Pancreas (tissue), 10 donors: ENCODE measurements at regions of chr12 and their contacts with region 1.

Region 1: DNA sequence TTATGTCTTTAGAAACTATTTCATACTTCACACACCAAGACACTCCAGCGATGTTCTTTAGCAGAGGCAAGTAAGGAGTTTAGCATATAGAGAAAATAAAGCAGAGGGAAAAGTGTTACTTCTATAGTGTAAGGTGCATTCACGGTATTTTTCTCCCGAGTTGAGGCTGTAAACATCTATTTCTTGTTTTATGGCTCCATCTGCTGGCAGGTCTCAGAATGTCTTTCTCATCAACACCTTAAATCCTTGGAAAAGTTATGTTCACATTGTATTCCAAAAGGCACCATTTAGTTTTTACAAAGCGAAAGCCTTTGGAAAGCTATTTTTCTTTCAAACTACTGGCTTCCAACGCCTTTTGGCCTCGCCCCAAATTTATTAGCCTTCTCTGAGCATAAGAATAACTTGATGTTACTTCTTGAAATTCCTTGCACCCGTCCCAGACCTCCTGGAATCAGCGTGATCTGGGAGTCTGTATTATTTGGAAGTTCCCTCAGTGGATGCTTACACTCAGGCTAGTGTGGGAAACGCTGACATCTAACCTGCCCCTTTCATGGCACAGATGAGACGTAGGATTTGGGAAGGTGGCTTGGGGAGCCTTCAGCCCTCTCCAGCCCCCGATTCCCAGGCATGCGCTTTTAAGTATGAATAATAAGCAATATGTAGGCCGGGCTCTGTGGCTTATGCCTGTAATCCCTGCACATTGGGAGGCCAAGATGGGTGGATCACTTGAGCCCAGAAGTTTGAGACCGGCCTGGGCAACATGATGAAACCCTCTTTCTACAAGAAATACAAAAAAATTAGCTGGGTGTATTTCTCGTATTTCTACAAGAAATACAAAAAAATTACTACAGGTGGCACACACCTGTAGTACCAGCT is 1.9 kb upstream of the PIWIL1 start:
- DNase-seq: peak in 2 of 6 donors; percentile 27 to 48
- ATAC-seq: peak in 3 of 4 donors; percentile 76 to 80 (median 79)
- H3K4me3 ChIP-seq: no peak overlapping the region
- H3K27ac ChIP-seq: no peak overlapping the region
- H3K4me1 ChIP-seq: no peaks in the 10 kb centered on the region
- H3K27me3 ChIP-seq: peaks cover 0 to 11% (median 0%) of the 10 kb centered on the region in 4 donors
- CTCF ChIP-seq: peak; percentile 9 to 59 (median 46)

Region 2: DNA sequence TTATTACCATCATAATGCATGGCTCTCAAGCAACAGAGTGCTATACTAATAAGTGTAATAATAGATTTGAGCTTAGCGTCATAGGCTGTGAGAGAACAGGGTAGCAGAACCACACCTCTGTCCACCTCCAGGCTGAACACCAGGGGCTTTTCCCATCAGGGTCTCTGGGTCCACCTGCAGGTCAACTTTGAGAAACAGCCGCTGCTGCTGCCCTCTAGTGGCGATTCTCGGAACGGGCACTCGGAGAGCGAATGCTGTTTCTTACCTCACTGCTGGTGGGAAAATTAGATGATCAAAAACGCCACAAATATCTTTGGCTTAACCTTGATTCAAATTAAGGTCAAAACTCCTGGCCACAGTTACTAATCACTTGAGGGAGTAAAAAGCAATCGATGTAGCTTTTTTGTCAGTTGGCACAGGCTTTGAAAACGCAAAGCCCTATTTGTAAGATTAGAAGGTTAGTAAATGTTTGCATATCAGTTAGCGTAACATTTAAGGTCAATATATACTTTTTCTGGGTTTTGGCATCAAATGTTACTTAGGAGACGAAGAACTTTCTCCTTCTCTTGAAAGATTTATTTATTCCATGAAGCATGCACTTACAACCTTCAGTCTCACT is 304.1 kb before region 1 on chr12:
- intact Hi-C with region 1: loop called in 1 of 3 experiments (anchors 5 kb)
- DNase-seq: peak in 5 of 6 donors; percentile 25 to 92 (median 68)
- ATAC-seq: peak in 3 of 4 donors; percentile 63 to 72 (median 67)
- H3K4me3 ChIP-seq: no peak overlapping the region
- H3K27ac ChIP-seq: no peak overlapping the region
- H3K4me1 ChIP-seq: no peaks in the 10 kb centered on the region
- H3K27me3 ChIP-seq: peaks cover 0 to 5% (median 0%) of the 10 kb centered on the region in 4 donors
- CTCF ChIP-seq: peak; percentile 80 to 90 (median 89)

Region 3: DNA sequence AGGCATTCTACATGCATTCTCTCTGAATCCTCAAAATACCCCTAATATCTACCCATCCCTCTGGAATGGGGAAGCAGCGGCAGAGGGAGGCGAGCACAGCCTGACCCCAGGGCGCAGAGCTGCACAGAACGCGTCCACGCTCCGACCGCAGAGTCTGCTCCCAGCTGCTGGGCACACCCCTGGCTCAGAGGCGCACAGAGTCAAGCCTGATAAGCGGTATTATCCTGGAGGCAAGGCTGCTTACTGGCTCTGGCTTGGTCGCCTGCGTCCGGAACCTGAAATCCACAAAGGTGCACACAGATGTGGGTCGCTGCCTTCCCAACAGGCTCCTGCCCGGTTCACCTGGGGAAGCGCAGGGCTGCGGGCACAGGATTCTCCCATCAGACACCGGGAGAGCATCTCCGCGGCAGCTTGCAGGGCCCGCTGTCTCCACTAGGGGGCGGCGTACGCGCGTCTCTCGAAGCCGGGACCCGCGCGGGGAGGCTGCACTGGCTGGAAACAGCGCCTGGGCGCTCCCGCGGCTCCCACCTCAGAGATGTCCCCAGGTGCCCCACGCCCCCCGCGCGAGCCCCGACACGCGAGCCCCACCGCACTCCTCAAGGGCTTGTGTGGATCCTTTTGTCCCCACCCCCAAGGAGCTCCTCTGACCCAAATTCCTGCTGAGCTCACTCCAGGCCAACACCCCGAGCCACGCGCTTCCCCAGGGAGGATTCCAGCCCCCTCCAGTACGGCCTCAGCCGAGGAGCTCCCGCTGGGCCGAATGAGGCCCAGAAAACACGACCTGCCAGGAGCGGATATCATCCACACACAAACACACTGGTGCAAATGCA is 293.6 kb before region 1 on chr12:
- intact Hi-C with region 1: loop called (anchors 5 to 10 kb)
- DNase-seq: peak in 5 of 6 donors; percentile 10 to 86 (median 62)
- ATAC-seq: peak in 3 of 4 donors; percentile 59 to 76 (median 69)
- H3K4me3 ChIP-seq: no peak overlapping the region
- H3K27ac ChIP-seq: no peak overlapping the region
- H3K4me1 ChIP-seq: no peaks in the 10 kb centered on the region
- H3K27me3 ChIP-seq: peaks cover 0 to 15% (median 2%) of the 10 kb centered on the region in 4 donors
- CTCF ChIP-seq: peak; percentile 65 to 95 (median 82)

Region 4: DNA sequence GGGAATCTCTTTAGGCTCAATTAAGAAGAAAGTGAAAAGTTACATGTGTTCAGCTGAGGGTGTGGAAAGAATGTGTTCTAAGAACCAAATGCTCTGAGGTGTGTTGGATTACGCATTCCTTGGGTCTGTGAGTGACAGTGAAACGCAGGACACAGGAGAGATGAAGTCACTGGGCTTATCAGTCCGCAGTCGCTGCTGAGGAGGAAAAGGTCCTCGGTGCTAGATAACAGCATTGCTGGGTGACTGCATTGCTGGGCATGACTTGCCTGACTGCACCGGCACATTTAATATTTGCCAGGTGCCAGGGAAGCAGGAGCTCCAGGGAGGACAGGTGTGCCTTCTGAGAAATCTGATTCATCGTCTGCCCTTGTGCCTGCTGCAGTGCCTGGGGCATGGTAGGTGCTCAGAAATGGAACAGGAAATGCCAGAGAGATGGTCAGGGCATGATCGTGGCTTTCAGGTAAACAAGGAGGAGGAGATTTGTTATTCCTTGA is 237.9 kb before region 1 on chr12:
- intact Hi-C with region 1: no loop called
- DNase-seq: no peak
- ATAC-seq: peak in 3 of 4 donors; percentile 36 to 57 (median 52)
- H3K4me3 ChIP-seq: no peak overlapping the region
- H3K27ac ChIP-seq: no peak overlapping the region
- H3K4me1 ChIP-seq: no peaks in the 10 kb centered on the region
- H3K27me3 ChIP-seq: peaks cover 0 to 8% (median 0%) of the 10 kb centered on the region in 4 donors
- CTCF ChIP-seq: no peak

Region 5: DNA sequence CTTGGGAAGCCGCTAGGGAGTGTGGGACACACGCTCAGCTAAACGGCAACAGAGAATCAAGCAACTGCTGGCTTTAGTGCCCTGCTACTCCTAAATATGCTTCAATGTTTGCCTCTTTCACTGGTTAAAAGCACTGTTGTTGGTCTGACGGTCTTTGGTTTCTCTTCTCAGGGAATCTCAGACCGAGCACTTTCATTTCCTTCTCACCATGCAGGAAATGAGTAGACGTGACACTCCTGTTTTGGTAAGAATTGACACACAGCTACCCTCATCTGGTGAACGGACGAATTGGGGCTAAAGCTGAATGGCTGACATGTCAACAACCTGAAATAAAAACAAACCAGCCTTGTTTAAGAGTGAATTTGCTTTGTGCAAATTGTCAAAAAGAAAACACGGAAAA is 55.5 kb before region 1 on chr12:
- intact Hi-C with region 1: no loop called
- DNase-seq: no peak
- ATAC-seq: no peak
- H3K4me3 ChIP-seq: no peak overlapping the region
- H3K27ac ChIP-seq: no peak overlapping the region
- H3K4me1 ChIP-seq: no peaks in the 10 kb centered on the region
- H3K27me3 ChIP-seq: peaks cover 0 to 6% (median 0%) of the 10 kb centered on the region in 4 donors
- CTCF ChIP-seq: no peak

Region 6: DNA sequence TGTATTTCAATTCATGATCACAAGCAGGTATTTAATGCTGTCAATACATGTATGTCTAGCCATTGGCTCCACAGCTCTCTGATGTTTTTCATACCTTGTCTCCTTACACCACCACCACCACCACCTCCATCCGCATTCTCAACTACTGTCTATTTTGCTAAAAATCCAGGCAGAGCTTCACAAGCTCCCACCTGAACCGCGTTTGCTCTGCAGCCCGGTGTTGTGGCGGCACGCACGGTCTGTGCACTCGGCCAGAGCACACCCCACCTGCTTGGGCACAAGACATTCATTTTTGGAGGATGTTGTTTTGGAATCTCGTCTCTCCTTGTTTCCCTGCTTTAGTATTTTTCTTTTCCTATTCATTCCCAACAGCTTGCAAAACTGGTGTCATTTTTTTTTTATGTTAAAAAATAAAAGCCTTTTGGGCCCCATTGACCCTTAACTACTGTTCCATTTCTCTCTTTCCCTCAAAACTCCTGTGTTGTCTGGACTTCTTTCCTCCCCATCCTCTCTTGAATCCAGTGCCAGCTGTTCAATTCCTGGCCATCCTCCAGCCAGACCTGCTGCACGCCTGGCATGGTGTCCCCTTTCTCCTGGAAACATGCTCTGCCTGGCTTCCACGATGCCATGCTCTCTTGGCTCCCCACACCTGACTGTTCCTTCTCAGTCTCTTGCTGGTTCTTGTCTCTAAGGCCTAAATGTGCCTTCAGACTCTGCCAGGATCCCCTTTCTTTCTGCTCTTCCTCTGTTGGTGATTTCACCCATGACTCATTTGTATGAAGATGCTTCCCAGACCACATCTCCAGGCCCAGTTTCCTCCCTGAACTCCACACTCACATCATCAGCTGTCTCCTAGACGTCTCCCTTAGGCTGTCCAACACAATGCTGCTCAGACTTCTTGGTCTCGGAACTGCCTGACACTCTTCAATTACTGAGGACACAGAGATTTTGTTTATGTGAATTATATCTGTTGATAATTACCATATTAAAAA is 39.8 kb after region 1 on chr12:
- intact Hi-C with region 1: no loop called
- DNase-seq: no peak
- ATAC-seq: no peak
- H3K4me3 ChIP-seq: no peak overlapping the region
- H3K27ac ChIP-seq: no peak overlapping the region
- H3K4me1 ChIP-seq: no peaks in the 10 kb centered on the region
- H3K27me3 ChIP-seq: no peaks in the 10 kb centered on the region
- CTCF ChIP-seq: no peak